ENCODE measurements at regions of chr11 and their contacts with region 1.

Region 1: DNA sequence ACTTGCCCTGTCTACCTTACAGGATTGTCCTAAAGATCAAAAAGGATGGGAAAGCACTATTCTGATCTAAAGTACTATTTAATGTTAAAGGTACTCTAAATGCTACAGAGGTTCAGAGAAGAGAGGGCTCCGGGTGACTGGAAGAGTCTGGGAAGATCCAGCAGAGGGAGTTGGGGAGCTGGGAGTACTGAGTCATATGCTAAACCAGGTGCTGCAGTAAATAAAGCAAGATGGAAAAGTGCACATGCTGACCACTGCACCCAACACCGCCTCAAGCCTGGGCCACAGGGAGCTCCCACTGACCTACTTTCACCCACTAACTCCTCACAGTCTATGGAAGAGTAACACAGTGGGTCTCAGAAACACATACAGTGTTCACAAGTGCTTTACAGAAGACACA is 49.3 kb downstream of the WT1 start:
- H3K4me3 ChIP-seq: no peak overlapping the region
- H3K27ac ChIP-seq: no peak overlapping the region
- H3K4me1 ChIP-seq: no peaks in the 10 kb centered on the region; the same call in 1 of the 2 replicates
- CTCF ChIP-seq: no peak

Region 2: GRCh38 chr11:32302821-32303220 is 83.2 kb before region 1 on chr11:
- CTCF ChIA-PET with region 1: no interaction called
- POLR2A ChIA-PET with region 1: no interaction called
- H3K4me3 ChIP-seq: no peak overlapping the region
- H3K27ac ChIP-seq: no peak overlapping the region
- H3K4me1 ChIP-seq: no peaks in the 10 kb centered on the region
- CTCF ChIP-seq: no peak

Region 3: DNA sequence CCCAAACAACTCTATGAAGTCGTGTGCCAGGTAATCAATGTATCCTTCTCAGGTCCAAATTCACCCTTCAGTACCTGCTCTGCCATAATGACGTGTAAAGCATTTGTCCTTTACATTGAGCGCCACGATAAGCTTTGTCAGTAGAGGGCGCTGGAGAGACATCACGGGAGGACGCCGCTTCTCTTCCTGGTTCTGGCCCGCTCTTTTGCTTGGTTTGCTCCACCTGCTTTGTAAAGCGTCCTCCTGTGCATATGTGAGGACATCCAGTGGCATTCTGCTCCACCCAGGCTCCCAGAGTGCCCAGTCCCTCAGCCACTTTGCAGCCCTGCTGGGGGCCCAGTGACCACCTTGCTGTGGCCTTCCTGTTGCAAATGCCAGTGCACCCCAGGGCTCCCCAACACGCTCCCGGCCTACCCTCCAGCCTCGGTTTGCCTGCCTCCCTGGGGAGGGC is 11.7 kb before region 1 on chr11:
- CTCF ChIA-PET with region 1: interaction called, 17 read pairs
- POLR2A ChIA-PET with region 1: no interaction called
- H3K4me3 ChIP-seq: no peak overlapping the region
- H3K27ac ChIP-seq: no peak overlapping the region
- H3K4me1 ChIP-seq: no peaks in the 10 kb centered on the region
- CTCF ChIP-seq: 0 out of 2 replicates have a peak, but pooled peaks have one; percentile 24

Region 4: DNA sequence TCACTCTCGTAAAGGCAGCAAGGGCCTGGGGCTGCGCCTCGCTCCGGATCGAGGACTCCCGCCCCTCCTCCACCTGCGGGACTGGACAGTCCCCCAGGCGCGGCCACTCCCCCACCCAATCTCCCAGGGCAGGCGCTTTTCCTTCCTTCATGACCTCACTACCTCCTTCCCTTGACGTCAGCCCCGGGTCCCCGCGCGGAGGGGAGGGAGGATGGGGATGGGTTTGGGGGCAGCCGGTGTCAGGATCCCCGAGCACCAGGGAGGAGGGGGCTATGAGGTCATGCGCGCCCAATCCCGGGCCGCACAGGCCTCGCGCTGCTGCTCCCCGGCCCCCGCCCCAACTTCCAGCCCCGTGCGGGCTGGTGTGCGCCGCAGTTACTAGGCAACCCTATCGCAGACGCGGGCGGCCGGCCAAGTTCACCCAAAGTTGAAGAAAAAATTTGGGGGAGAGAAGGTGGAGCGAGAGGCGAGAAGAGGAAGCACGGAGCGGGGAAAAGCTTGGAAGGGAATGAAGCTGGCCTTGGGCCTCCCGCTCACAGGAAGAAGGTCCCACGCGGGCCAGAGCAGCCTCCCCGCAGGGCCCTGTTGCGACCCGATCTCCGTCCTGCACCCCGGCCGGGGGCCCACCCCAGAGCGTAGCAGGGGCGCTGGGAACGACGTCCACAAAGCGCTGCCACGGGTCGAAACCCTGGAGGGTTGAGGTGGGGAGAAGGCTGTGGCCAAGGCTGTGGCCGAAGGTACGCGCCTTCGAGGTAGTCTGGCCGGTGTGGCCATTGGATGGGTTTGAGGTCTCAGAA is 41.0 kb after region 1 on chr11:
- CTCF ChIA-PET with region 1: no interaction called
- POLR2A ChIA-PET with region 1: no interaction called
- H3K4me3 ChIP-seq: no peak overlapping the region
- H3K27ac ChIP-seq: no peak overlapping the region
- H3K4me1 ChIP-seq: no peaks in the 10 kb centered on the region
- CTCF ChIP-seq: no peak